GM13976 (cell line): ENCODE measurements at regions of chr1 and their contacts with region 1.

Region 1: GRCh38 chr1:66764994-66765578 is 12.8 kb downstream of the DYNLT5 start:
- DNase-seq: peak; percentile 31
- CTCF ChIP-seq: peak; percentile 63

Region 2: GRCh38 chr1:66944330-66945274 is 179.5 kb after region 1 on chr1:
- in situ Hi-C with region 1: no loop called
- DNase-seq: no peak
- CTCF ChIP-seq: no peak

Region 3: GRCh38 chr1:67149179-67149770 is 384.2 kb after region 1 on chr1:
- in situ Hi-C with region 1: loop called (anchors 10 kb)
- DNase-seq: peak; percentile 73
- CTCF ChIP-seq: peak; percentile 56